MCF 10A (cell line): ENCODE measurements at regions of chr6 and their contacts with region 1.

Region 1: DNA sequence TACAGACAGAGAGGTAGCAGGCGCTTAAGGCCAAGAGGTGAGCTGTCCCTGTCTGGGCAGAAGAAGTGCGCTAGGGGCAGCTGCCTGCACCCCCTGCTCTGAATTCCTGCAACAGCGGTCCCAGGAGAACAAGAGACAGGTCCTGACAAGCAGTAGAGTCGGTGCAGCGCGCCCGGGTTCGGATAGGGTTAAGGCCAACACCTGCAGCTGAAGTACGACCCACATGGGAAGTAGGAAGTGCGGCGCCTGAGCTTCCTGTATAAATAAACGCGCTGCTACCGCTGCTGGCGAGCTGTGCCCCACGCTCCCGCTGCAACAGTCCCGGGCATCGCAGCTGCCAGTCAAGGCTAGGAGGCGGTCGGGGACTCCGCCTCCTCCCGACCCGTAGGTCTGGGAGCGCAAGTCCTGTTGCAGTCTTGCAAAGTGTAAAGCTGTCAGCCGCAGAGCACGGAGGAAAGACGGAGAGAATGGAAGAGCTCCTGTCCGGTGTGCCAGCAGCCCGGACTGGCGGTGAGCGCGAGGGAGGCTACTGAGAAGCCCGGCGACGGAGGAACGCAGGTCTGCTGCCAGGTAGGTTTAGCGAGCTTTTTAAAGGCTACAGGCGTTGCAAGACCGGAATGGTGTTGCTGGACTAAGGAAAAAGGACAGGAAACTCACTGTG is at the start of gene RNF144B:
- DNase-seq: peak; percentile 94
- H3K4me3 Mint-ChIP-seq: peak within 1 kb of the TSS; percentile 84
- H3K27ac Mint-ChIP-seq: peak within 1 kb of the TSS; percentile 73
- H3K4me1 Mint-ChIP-seq: peaks cover 17% of the 10 kb centered on the region
- H3K27me3 Mint-ChIP-seq: no peaks in the 10 kb centered on the region
- CTCF ChIP-seq: no peak
- total RNA-seq, gene RNF144B: 40.6 and 57.9 TPM in 2 replicates

Region 2: DNA sequence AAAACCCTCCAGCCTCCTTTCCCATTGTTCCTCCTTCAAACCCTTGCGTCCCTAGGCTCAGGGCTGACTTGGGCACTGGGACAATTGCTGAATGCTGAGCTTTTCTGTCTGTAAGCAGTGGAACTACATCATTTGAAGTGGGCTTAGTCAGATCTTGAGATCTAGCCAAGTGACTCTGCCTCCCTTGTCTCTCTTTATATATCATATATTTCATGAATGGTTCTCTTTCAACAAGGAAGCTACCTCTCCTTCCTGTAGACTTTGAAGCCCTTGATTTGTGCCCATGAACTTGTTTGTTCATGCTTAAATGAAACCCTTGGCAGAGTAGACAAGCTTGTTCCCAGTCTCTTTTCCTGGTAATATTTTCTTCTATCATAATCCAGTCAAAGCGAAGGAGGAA is 339.8 kb before region 1 on chr6:
- CTCF ChIA-PET with region 1: no interaction called
- POLR2A ChIA-PET with region 1: no interaction called
- intact Hi-C with region 1: no loop called
- DNase-seq: no peak
- H3K4me3 Mint-ChIP-seq: no peak overlapping the region
- H3K27ac Mint-ChIP-seq: no peak overlapping the region
- H3K4me1 Mint-ChIP-seq: peaks cover 8% of the 10 kb centered on the region
- H3K27me3 Mint-ChIP-seq: no peaks in the 10 kb centered on the region
- CTCF ChIP-seq: no peak

Region 3: GRCh38 chr6:18221288-18221615 is 165.9 kb before region 1 on chr6:
- CTCF ChIA-PET with region 1: no interaction called
- POLR2A ChIA-PET with region 1: no interaction called
- intact Hi-C with region 1: no loop called
- DNase-seq: no peak
- H3K4me3 Mint-ChIP-seq: no peak overlapping the region
- H3K27ac Mint-ChIP-seq: no peak overlapping the region
- H3K4me1 Mint-ChIP-seq: no peaks in the 10 kb centered on the region
- H3K27me3 Mint-ChIP-seq: no peaks in the 10 kb centered on the region
- CTCF ChIP-seq: no peak

Region 4: GRCh38 chr6:18264219-18264922 is 122.8 kb before region 1 on chr6 and contains the start of gene DEK:
- CTCF ChIA-PET with region 1: no interaction called
- POLR2A ChIA-PET with region 1: interaction called, 40 read pairs
- intact Hi-C with region 1: loop called (anchors 5 kb)
- DNase-seq: peak; percentile 83
- H3K4me3 Mint-ChIP-seq: peak within 1 kb of the TSS; percentile 96
- H3K27ac Mint-ChIP-seq: peak within 1 kb of the TSS; percentile 81
- H3K4me1 Mint-ChIP-seq: peaks cover 36% of the 10 kb centered on the region
- H3K27me3 Mint-ChIP-seq: no peaks in the 10 kb centered on the region
- CTCF ChIP-seq: peak; percentile 61
- total RNA-seq, gene DEK: 118 and 148 TPM in 2 replicates

Region 5: DNA sequence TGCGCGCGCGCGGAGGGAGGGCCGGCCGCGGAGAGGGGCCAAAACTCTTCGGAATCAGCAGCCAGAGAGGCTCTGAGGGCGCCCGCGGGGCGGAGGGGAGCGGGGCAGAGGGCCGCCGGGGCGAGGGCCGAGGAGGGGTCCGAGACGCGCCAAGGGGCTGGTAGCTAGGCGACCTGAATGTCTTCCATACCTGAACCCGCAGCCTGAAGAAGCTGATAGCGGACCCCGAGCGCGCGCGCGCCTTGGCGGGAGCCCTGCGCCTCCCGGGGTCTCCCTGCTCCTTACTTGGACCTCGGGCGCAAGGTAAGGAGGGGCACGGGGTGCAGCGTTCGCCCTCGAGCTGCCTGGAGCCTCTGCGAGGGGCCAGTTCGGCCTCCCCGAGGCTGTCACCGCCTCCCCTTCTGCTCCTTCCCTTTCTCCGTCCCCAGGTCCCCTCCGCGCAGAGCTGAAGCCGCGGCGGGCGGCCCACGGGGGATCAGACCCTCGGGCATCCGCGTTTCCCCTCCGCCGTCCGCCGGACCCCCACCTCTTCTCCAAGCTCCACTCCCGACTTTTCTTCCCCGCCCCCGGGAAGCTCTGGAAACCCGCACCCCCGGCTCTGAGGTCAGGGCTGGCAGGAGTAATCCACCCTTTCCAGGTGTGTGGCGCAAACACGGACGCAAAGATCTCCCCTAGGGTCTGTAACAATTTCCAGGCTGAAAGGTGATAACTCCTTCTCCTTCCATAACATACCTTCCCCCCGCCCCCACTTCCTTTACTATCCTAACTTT is 109.8 kb before region 1 on chr6:
- CTCF ChIA-PET with region 1: no interaction called
- POLR2A ChIA-PET with region 1: no interaction called
- intact Hi-C with region 1: no loop called
- DNase-seq: no peak
- H3K4me3 Mint-ChIP-seq: peak overlapping the region; percentile 68
- H3K27ac Mint-ChIP-seq: no peak overlapping the region
- H3K4me1 Mint-ChIP-seq: no peaks in the 10 kb centered on the region
- H3K27me3 Mint-ChIP-seq: peaks cover 29% of the 10 kb centered on the region
- CTCF ChIP-seq: no peak

Region 6: DNA sequence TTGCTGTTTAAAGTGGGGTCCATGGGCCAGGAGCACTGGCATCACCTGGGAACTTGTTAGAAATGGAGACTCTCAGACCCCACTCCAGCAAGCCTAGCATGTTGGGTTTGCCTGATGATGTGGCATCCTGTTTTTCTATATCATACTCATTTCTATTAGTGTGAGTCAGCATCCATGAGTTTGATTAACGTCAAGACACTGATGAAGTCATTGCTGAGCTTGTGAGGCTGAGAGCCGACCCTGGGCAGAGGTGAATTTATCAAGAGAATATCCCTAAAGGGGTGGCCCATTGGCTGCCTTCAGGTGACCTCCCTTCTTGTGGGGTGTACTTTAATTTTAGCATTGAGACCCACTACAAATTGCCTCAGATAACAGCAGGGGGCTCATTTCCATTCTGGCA is 43.5 kb before region 1 on chr6:
- CTCF ChIA-PET with region 1: interaction called, 19 read pairs
- POLR2A ChIA-PET with region 1: interaction called, 159 read pairs
- intact Hi-C with region 1: loop called (anchors 1 kb)
- DNase-seq: peak; percentile 47
- H3K4me3 Mint-ChIP-seq: no peak overlapping the region
- H3K27ac Mint-ChIP-seq: peak overlapping the region; percentile 83
- H3K4me1 Mint-ChIP-seq: peaks cover 32% of the 10 kb centered on the region
- H3K27me3 Mint-ChIP-seq: no peaks in the 10 kb centered on the region
- CTCF ChIP-seq: no peak

Region 7: GRCh38 chr6:18359237-18359885 is 27.8 kb before region 1 on chr6:
- CTCF ChIA-PET with region 1: interaction called, 3 read pairs
- POLR2A ChIA-PET with region 1: interaction called, 72 read pairs
- intact Hi-C with region 1: no loop called
- DNase-seq: no peak
- H3K4me3 Mint-ChIP-seq: no peak overlapping the region
- H3K27ac Mint-ChIP-seq: no peak overlapping the region
- H3K4me1 Mint-ChIP-seq: peaks cover 16% of the 10 kb centered on the region
- H3K27me3 Mint-ChIP-seq: no peaks in the 10 kb centered on the region
- CTCF ChIP-seq: no peak

Region 8: DNA sequence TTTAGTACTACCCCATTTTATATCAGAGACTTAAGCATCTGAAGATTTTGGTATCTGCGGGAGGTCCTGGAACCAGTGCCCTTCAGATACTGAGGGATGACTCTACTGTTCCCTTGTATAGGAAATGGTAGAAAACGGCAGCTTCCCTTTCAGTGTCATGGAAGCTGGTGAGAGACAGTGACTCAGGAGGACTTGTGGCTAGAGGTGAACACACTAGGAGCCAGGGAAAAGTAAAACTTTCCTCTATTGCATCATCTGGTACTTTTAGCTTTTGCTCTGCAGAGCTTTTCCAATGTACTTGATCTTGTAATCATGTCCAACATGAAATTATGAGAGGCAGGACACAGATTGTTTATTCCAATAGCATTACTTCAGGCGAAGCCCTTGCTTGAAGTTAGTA is 45.0 kb after region 1 on chr6:
- CTCF ChIA-PET with region 1: interaction called, 4 read pairs
- POLR2A ChIA-PET with region 1: interaction called, 38 read pairs
- intact Hi-C with region 1: loop called (anchors 1 kb)
- DNase-seq: peak; percentile 83
- H3K4me3 Mint-ChIP-seq: peak overlapping the region; percentile 0
- H3K27ac Mint-ChIP-seq: peak overlapping the region; percentile 98
- H3K4me1 Mint-ChIP-seq: peaks cover 43% of the 10 kb centered on the region
- H3K27me3 Mint-ChIP-seq: no peaks in the 10 kb centered on the region
- CTCF ChIP-seq: no peak

Region 9: DNA sequence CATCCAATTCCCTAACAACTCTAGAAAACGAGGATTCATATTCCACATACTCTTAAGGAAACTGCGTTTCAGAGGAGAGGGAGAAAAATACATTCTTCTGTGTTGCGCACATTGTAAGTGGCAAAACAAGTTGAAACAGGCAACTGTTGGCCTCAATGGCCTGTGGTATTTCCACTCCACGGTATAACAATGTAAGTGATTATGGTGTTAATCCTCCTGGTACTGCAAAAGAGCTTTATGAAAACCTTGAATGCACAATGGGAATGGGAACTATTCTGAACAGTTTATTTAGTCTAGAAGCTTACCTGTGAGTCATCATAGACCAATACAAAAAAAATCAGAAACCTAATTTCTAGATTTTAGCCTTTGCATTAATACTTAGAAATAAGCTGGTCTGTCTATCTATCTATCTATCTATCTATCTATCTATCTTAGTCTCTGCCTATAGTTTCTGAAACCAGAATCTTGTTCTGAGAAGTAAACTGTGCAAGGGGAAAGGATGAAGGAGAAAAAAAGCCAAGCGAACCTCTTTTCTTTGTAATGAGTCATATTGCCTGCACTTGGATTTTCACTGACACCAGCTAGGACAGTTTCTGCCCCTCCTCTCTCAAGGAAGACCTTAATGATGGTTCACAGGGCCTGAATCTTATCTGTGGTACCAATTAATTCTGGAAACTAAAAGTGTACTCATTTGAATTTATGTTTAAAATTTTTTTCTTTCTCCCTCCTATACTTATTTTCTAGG is 101.5 kb after region 1 on chr6:
- CTCF ChIA-PET with region 1: no interaction called
- POLR2A ChIA-PET with region 1: interaction called, 14 read pairs
- intact Hi-C with region 1: no loop called
- DNase-seq: peak; percentile 61
- H3K4me3 Mint-ChIP-seq: no peak overlapping the region
- H3K27ac Mint-ChIP-seq: peak overlapping the region; percentile 1
- H3K4me1 Mint-ChIP-seq: peaks cover 37% of the 10 kb centered on the region
- H3K27me3 Mint-ChIP-seq: no peaks in the 10 kb centered on the region
- CTCF ChIP-seq: no peak